PC-3 (cell line): ENCODE measurements at regions of chr7 and their contacts with region 1.

Region 1: DNA sequence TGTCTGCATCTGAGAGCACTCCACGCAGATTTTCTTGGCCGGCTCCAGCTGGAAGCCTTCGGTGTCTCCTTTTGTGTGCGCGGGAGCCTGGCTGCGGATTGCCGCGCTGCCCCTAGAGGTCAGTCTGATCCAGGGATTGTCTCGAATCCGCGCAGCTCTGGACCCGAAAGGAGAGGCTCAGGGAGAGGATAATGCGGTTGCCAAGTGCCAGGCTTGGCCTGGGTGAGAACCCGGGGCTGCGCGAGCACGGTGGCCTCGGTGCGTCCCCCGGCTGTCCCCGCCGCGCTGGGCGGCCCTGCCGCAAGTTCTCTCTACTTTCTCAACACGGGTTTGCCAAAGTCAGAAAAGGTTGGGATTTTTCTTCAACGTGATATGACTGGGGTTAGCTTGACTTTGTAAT is 140.9 kb downstream of the ADCYAP1R1 start:
- DNase-seq: peak; percentile 73
- ATAC-seq: peak; percentile 100
- H3K4me3 ChIP-seq: no peak overlapping the region
- H3K27ac ChIP-seq: no peak overlapping the region
- H3K4me1 ChIP-seq: no peaks in the 10 kb centered on the region
- H3K27me3 ChIP-seq: peaks cover 53% of the 10 kb centered on the region
- CTCF ChIP-seq: peak; percentile 76

Region 2: DNA sequence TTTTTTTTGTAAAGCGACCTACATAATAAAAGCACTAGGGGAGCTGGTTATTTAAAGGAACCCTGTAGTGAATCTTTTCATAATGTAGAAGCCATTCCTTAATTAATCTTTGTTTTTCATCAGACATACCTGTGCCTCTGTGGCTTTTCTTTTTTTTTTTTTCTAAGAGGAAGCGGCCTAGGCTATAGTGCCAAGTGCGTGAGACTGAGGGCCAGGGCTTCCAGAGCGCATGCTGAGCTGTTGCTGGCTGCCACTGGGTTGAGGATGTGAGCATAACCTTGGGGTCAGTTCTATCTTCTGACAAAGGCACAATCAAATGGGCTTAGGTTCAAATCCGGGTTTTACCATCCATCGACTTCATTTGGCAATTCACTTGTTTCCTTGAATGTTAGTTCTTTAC is 43.9 kb after region 1 on chr7:
- CTCF ChIA-PET with region 1: no interaction called
- POLR2A ChIA-PET with region 1: no interaction called
- intact Hi-C with region 1: no loop called
- DNase-seq: no peak
- ATAC-seq: no peak
- H3K4me3 ChIP-seq: no peak overlapping the region
- H3K27ac ChIP-seq: no peak overlapping the region
- H3K4me1 ChIP-seq: no peaks in the 10 kb centered on the region
- H3K27me3 ChIP-seq: peaks cover 70% of the 10 kb centered on the region
- CTCF ChIP-seq: no peak

Region 3: DNA sequence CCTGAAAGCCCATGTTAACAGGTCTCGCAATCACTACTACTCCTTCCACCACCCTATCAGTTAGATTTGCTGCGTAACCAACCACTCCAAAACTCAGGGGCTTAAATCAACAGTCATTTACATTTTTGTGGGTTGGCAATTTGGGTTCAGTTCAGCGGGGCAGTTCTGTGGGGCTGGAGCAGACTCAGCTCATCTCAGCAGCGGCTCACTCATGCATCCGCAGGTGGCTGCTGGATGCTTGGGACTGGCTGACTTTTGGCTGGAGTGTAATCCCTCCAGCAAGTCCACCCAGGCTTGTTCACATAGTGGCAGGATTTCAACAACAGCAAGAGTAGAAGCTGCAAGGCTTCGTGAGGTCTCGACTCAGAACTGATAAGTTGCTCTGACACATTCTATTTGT is 68.4 kb after region 1 on chr7:
- CTCF ChIA-PET with region 1: no interaction called
- POLR2A ChIA-PET with region 1: no interaction called
- intact Hi-C with region 1: no loop called
- DNase-seq: no peak
- ATAC-seq: no peak
- H3K4me3 ChIP-seq: no peak overlapping the region
- H3K27ac ChIP-seq: no peak overlapping the region
- H3K4me1 ChIP-seq: no peaks in the 10 kb centered on the region
- H3K27me3 ChIP-seq: peaks cover 73% of the 10 kb centered on the region
- CTCF ChIP-seq: no peak

Region 4: DNA sequence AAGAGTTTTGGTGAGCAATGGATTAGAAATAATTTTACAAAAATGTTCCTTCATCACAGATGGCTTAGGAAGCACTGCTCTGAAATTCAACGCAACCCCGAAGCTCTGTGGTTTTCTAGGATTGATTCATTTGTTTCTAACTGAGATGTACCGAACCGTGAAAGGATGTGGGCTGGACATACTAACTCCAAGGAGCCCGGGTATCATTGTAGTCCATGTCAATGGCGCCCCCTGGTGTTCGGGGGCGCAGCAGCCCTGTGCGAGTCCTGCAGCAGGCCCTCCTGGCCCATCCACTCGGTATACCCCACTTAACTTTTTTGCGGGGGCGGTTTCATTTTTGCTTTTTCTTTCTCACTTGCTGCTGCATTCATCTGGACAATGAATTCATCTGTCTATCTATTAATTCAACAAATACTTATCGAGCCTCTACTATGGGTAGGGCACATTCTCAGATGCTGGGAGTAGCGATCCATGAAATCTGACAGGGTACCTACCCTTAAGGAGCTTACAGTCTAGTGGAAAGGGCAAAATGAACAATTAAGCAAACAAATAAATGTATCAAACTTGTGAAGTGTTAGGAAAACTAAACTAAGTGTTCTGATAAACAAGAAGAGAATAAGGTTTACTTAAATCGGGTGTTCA is 295.7 kb after region 1 on chr7:
- CTCF ChIA-PET with region 1: no interaction called
- POLR2A ChIA-PET with region 1: no interaction called
- intact Hi-C with region 1: loop called (anchors 1 kb)
- DNase-seq: peak; percentile 87
- ATAC-seq: peak; percentile 100
- H3K4me3 ChIP-seq: no peak overlapping the region
- H3K27ac ChIP-seq: no peak overlapping the region
- H3K4me1 ChIP-seq: peaks cover 9% of the 10 kb centered on the region; the same call in 1 of the 2 replicates
- H3K27me3 ChIP-seq: no peaks in the 10 kb centered on the region
- CTCF ChIP-seq: peak; percentile 92

Region 5: GRCh38 chr7:31633894-31634494 is 441.0 kb after region 1 on chr7:
- CTCF ChIA-PET with region 1: no interaction called
- POLR2A ChIA-PET with region 1: no interaction called
- intact Hi-C with region 1: loop called (anchors 1 kb)
- DNase-seq: peak; percentile 80
- ATAC-seq: peak; percentile 90
- H3K4me3 ChIP-seq: no peak overlapping the region
- H3K27ac ChIP-seq: no peak overlapping the region
- H3K4me1 ChIP-seq: no peaks in the 10 kb centered on the region
- H3K27me3 ChIP-seq: peaks cover 46% of the 10 kb centered on the region
- CTCF ChIP-seq: peak; percentile 76

Region 6: GRCh38 chr7:31735991-31736982 is 543.3 kb after region 1 on chr7:
- CTCF ChIA-PET with region 1: no interaction called
- POLR2A ChIA-PET with region 1: no interaction called
- intact Hi-C with region 1: loop called (anchors 10 kb)
- DNase-seq: peak; percentile 79
- ATAC-seq: peak; percentile 95
- H3K4me3 ChIP-seq: no peak overlapping the region
- H3K27ac ChIP-seq: no peak overlapping the region
- H3K4me1 ChIP-seq: no peaks in the 10 kb centered on the region
- H3K27me3 ChIP-seq: no peaks in the 10 kb centered on the region
- CTCF ChIP-seq: peak; percentile 84